Activated CD8-positive, alpha-beta T cell treated with anti-CD3 and anti-CD28 coated beads, Interleukin-2, amount 10 ng/mL, durations not matched to agents 7 days and 5 days (primary cell): ENCODE measurements at regions of chr4 and their contacts with region 1.

Region 1: DNA sequence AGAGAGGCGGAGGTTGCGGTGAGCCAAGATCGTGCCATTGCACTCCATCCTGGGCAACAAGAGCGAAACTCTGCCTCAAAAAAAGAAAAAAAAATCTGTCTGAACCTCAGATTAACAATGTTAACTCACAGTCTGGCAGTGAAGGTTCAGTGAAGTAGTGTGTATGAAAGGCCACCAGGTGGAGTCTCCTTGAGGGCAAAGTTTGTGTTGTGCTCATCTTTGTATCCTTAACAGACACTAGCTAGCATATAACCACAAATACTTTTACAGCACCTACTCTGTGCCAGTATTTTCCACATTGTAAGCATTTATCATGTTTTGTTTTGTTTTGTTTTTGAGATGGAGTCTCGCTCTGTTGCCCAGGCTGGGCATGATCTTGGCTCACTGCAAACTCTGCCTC is 46.0 kb upstream of the MGST2 start:
- DNase-seq: peak; percentile 31
- ATAC-seq: peak; percentile 72
- H3K4me3 Mint-ChIP-seq: no peak overlapping the region
- H3K27ac Mint-ChIP-seq: no peak overlapping the region
- H3K4me1 Mint-ChIP-seq: no peaks in the 10 kb centered on the region
- H3K27me3 Mint-ChIP-seq: no peaks in the 10 kb centered on the region

Region 2: DNA sequence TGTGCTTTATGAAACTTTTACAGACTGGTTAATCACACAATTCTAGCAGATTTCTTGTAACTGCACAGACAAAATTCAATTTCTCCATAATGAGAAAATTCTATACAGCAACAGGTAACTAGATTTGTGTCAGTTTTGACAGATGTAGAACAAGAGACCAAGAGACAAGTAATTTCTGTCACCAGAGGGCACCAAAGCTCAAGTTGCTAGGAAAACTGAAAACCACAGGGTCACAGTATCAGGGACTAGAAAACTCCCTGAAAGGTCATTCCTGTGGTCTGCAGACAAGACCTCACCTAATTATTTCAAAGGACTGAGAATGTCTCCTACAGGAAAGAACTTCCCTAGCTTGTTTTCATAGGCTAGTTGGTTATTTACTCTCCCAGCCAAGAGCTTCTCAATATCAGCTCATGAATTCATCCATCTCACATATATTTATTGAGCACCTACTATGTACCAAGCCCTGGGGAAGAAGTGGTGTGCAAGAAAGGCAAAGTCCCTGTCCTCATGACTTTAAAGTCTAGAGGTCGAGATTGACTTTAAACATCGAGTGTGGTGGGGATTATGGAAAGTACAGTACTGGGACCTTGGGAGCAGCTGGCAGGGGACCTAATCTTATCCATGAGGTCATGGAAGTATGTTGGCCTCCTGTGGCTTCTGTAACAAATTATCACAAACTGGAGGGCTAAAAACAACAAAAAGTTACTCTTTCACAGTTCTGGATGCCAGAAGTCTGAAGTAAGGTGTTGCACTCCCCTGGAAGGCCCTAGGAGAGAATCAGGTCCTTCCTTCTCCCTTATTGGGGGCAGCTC is 15.9 kb before region 1 on chr4:
- CTCF ChIA-PET with region 1: interaction called, 21 read pairs
- POLR2A ChIA-PET with region 1: no interaction called
- DNase-seq: peak; percentile 56
- ATAC-seq: peak; percentile 50
- H3K4me3 Mint-ChIP-seq: no peak overlapping the region
- H3K27ac Mint-ChIP-seq: no peak overlapping the region
- H3K4me1 Mint-ChIP-seq: peaks cover 21% of the 10 kb centered on the region
- H3K27me3 Mint-ChIP-seq: peaks cover 5% of the 10 kb centered on the region

Region 3: DNA sequence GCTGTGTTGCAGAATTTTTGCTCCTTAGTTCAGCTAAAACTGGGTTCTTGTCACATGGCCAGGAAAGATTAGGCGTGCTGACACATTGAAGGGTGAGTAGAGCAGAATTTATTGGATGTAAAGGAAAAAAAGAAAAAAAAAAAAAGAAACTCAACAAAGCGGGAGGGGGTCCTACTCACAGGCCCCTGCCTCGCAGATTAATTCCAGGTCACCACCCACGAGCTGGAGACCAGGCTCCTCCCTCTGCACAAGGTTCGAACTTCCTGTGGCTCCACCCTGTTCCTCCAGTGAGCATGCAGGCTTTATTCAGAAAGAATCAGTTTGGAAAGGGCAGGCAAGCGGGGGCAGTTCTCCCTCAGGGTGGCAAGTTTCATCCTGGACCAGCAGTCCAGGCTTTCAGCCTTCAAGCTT is 63.1 kb after region 1 on chr4:
- CTCF ChIA-PET with region 1: no interaction called
- POLR2A ChIA-PET with region 1: no interaction called
- DNase-seq: no peak
- ATAC-seq: no peak
- H3K4me3 Mint-ChIP-seq: no peak overlapping the region
- H3K27ac Mint-ChIP-seq: no peak overlapping the region
- H3K4me1 Mint-ChIP-seq: peaks cover 16% of the 10 kb centered on the region
- H3K27me3 Mint-ChIP-seq: peaks cover 3% of the 10 kb centered on the region